Heart right ventricle (tissue), 16 donors: ENCODE measurements at regions of chr11 and their contacts with region 1.

Region 1: DNA sequence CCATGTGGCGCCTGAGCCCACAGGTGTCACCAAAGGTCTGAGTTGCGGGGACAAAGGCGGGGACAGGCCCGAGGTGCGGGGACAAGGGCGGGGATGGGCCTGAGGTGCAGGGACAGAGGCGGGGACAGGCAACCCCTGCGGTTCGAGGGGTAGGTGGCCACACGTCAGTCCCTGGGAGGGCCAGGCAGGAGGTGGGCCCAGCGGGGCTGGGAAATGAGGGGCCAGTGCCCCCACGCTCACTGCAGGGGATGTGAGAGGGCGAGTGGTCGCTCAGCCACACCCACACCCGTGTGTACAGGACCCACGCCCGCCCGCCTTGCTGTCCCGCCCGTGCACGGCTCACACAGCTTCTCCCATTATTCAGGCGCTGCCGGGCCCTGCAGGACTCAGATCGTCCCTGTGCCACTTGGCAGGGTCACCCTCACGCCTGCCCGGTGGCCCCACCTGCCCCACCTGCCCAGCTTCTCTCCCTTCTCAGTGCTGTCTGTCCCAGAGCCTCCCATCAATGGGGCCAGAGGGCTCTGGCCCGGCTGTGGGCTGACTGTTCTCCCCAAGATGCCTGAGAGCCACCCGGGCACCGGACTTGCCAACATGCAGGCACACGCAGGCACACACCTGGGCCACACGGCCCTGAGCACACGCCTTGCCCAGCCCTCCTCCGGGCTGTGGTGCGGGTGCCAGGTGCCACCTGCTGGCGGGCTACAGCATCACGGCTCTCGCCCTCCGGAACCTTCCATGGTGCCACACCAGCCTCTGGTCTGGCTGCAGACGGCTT is 14.2 kb upstream of the MUC6 start:
- DNase-seq: peak; percentile 43 to 74
- ATAC-seq: peak; percentile 84 to 95 (median 90)
- H3K4me3 ChIP-seq: no peak overlapping the region
- H3K27ac ChIP-seq: no peak overlapping the region
- H3K4me1 ChIP-seq: peaks cover 0 to 31% (median 0%) of the 10 kb centered on the region in 9 donors
- H3K27me3 ChIP-seq: peaks cover 0 to 60% (median 45%) of the 10 kb centered on the region in 7 donors
- CTCF ChIP-seq: peak; percentile 74 to 89 (median 87)

Region 2: DNA sequence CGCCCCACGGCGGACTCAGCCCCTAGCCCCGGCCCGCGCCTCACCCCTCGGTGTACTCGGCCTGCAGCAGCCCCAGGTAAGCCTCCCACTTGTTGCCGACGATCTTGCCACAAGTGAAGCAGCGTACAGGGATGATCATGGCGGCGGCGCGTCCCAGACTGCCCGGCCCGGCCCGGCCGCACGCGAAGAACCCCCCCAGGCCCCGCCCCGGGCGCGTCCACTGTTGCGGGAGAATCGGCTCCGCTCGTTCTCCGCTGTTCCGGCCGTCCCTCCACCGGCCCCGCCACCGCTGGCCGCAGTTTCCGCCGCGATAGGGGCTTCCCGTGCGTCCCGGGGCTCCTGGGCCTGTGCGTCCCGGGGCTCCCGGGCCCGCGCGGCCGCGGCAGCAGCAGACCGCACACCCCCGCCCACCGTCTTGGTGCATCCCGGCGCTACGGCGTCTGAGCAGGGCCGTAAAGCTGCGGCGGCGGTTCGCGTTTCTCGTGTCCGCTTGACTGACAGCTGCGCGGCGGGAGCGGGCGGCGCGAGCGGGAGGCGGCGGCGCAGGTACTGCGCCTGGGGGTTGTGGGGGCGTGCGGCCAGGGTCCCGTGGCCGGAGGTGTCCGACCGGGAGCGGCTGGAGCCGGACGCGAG is 208.3 kb before region 1 on chr11 and contains the starts of genes POLR2L and TSPAN4:
- intact Hi-C with region 1: loop called in 5 of 10 experiments (anchors 2 to 5 kb)
- DNase-seq: peak; percentile 91 to 92
- ATAC-seq: peak in 7 of 8 donors; percentile 18 to 58 (median 48)
- H3K4me3 ChIP-seq: peak within 1 kb of the TSS; percentile 71 to 100 (median 96)
- H3K27ac ChIP-seq: peak within 1 kb of the TSS; percentile 94 to 100 (median 97)
- H3K4me1 ChIP-seq: peaks cover 32 to 87% (median 67%) of the 10 kb centered on the region in 9 donors
- H3K27me3 ChIP-seq: no peaks in the 10 kb centered on the region
- CTCF ChIP-seq: no peak
- total RNA-seq, gene POLR2L: 194 to 279 (median 234) TPM
- total RNA-seq, gene TSPAN4: 22.2 to 46.4 (median 26.9) TPM

Region 3: DNA sequence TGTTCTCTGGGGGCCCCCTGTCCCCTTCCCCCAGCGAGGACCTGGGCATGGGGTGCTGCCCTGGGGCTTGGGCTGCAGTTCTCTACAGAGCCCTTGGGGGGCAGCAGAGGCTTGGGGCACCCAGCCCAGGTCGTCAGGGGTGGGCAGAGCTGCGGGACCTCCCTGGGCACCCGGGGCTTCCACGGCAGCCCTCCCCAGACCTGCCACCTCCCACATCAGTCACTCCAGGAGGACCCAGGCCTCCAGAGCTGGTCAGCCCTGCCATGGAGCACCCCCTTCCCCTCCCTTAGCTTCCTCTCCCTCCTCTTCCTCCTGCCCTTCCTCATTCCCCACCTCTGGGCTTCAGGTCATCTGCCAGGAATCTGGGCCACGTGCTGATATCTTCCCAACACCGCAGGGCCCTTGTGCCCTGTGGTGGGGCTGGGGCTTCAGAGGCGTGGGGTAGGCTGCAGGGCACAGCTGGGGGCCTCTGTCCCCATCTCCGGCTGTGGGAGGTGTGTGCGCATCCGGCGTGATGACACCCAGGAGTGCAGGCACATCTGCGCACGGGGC is 202.3 kb before region 1 on chr11:
- intact Hi-C with region 1: loop called (anchors 1 to 10 kb)
- DNase-seq: peak in 1 of 2 donors; percentile 63
- ATAC-seq: peak in 1 of 8 donors; percentile 6
- H3K4me3 ChIP-seq: peak overlapping the region in 1 of 10 donors; percentile 12
- H3K27ac ChIP-seq: no peak overlapping the region
- H3K4me1 ChIP-seq: peaks cover 34 to 90% (median 61%) of the 10 kb centered on the region in 9 donors
- H3K27me3 ChIP-seq: peaks cover 0 to 28% (median 0%) of the 10 kb centered on the region in 7 donors
- CTCF ChIP-seq: peak; percentile 77 to 96 (median 87)

Region 4: GRCh38 chr11:859509-860131 is 191.1 kb before region 1 on chr11:
- intact Hi-C with region 1: loop called in 2 of 10 experiments (anchors 10 kb)
- DNase-seq: peak; percentile 79 to 84
- ATAC-seq: peak; percentile 60 to 81 (median 76)
- H3K4me3 ChIP-seq: peak overlapping the region in 5 of 10 donors; percentile 5 to 34 (median 24)
- H3K27ac ChIP-seq: peak overlapping the region in 8 of 10 donors; percentile 14 to 69 (median 50)
- H3K4me1 ChIP-seq: peaks cover 11 to 52% (median 33%) of the 10 kb centered on the region in 9 donors
- H3K27me3 ChIP-seq: no peaks in the 10 kb centered on the region
- CTCF ChIP-seq: no peak

Region 5: DNA sequence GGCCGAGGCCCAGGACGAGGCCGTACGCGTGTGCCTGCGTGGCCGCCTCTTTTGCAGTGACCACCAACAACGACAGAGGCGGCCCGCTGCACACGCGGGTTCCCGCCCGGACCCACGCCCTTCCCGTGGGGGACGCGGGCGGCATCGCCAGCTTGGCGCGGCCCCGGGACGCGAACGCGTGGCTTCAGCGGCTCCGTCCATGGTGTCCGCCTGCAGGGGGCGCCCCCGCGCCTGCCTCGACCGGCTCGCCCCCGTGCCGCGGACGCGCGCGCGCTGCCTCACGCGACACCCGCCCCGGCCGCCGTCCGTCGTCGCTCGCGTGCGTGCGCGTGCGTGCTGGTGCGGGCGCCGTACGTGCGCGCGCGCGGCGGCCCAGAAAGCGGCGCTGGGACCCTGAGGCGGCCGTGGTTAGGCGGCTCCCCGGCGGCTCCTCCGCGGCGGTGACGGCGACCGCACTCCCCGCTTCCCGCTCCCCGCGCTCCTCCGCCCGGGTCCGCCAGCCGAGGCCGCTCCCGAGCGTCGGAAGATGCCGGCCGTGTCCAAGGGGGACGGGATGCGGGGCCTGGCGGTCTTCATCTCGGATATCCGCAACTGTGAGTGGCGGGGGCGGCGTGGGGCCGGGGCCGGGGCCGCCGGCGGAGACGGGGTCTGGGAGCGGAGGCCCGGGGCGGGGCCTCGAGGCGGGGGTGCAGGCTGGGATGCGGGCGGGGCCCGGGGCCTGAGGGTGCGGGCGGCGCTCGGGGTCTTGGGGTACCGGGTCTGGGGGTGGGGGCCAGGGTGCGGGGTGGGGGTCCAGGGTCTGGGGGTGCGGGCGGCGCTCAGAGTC is 125.1 kb before region 1 on chr11 and contains the start of gene AP2A2:
- intact Hi-C with region 1: loop called in 4 of 10 experiments (anchors 5 to 10 kb)
- DNase-seq: peak; percentile 86 to 94
- ATAC-seq: peak; percentile 80 to 95 (median 86)
- H3K4me3 ChIP-seq: peak within 1 kb of the TSS; percentile 55 to 94 (median 79)
- H3K27ac ChIP-seq: peak within 1 kb of the TSS; percentile 76 to 94 (median 92)
- H3K4me1 ChIP-seq: peaks cover 4 to 55% (median 31%) of the 10 kb centered on the region in 9 donors
- H3K27me3 ChIP-seq: no peaks in the 10 kb centered on the region
- CTCF ChIP-seq: peak; percentile 63 to 93 (median 76)
- total RNA-seq, gene AP2A2: 28.9 to 58.4 (median 38.8) TPM

Region 6: DNA sequence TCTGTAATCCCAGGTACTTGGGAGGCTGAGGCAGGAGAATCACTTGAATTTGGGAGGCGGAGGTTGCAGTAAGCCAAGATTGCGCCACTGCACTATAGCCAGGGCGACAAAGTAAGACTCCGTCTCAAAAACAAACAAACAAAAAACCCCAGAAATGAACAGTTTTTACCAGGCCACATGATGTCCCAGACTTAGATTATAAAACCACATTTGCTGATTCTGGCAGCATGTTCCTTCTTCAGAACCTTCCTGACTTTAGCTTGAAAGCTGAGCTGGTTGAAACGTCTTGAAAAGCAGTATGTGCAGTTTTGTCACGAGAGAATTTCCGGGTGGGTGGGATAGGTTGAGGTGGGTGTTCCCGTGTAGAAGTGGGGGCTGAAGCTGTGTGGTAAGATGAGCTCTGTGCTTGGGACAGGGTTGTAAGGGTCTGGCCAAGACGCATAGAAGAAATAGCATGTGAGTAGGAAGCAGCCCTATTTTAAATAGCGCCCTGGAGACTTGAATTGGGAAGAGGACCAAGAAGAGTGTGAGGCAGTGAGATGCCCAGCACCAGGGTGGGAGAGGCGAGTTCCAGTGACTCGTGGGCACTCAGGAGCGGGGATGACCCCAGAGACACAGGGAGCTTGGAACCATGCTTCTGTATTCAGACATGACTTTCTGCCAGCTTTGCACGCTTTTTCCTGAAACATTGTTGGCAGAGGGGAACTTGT is 117.5 kb before region 1 on chr11:
- intact Hi-C with region 1: loop called in 3 of 10 experiments (anchors 10 kb)
- DNase-seq: no peak
- ATAC-seq: peak in 7 of 8 donors; percentile 20 to 48 (median 34)
- H3K4me3 ChIP-seq: peak overlapping the region in 2 of 10 donors; percentile 4 to 15
- H3K27ac ChIP-seq: peak overlapping the region in 9 of 10 donors; percentile 3 to 78 (median 66)
- H3K4me1 ChIP-seq: peaks cover 4 to 83% (median 62%) of the 10 kb centered on the region in 9 donors
- H3K27me3 ChIP-seq: no peaks in the 10 kb centered on the region
- CTCF ChIP-seq: no peak